ENCODE measurements at regions of chr7 and their contacts with region 1.

Region 1: GRCh38 chr7:32891800-32892520 is 400 bp upstream of the KBTBD2 start:
- DNase-seq: peak; percentile 91
- ATAC-seq: peak; percentile 57
- H3K4me3 ChIP-seq: peak overlapping the region; percentile 98
- H3K27ac ChIP-seq: peak overlapping the region; percentile 71
- H3K4me1 ChIP-seq: peaks cover 13% of the 10 kb centered on the region
- H3K27me3 ChIP-seq: no peaks in the 10 kb centered on the region
- CTCF ChIP-seq: no peak

Region 2: GRCh38 chr7:32490127-32490822 is 401.7 kb before region 1 on chr7 and contains the start of gene LSM5:
- CTCF ChIA-PET with region 1: no interaction called
- POLR2A ChIA-PET with region 1: no interaction called
- intact Hi-C with region 1: loop called (anchors 5 kb)
- DNase-seq: peak; percentile 93
- ATAC-seq: peak; percentile 67
- H3K4me3 ChIP-seq: peak within 1 kb of the TSS; percentile 91
- H3K27ac ChIP-seq: peak within 1 kb of the TSS; percentile 70
- H3K4me1 ChIP-seq: peaks cover 14% of the 10 kb centered on the region; the same call in 1 of the 2 replicates
- H3K27me3 ChIP-seq: no peaks in the 10 kb centered on the region
- CTCF ChIP-seq: no peak
- total RNA-seq, gene LSM5: 24.8 and 38.9 TPM in 2 replicates

Region 3: DNA sequence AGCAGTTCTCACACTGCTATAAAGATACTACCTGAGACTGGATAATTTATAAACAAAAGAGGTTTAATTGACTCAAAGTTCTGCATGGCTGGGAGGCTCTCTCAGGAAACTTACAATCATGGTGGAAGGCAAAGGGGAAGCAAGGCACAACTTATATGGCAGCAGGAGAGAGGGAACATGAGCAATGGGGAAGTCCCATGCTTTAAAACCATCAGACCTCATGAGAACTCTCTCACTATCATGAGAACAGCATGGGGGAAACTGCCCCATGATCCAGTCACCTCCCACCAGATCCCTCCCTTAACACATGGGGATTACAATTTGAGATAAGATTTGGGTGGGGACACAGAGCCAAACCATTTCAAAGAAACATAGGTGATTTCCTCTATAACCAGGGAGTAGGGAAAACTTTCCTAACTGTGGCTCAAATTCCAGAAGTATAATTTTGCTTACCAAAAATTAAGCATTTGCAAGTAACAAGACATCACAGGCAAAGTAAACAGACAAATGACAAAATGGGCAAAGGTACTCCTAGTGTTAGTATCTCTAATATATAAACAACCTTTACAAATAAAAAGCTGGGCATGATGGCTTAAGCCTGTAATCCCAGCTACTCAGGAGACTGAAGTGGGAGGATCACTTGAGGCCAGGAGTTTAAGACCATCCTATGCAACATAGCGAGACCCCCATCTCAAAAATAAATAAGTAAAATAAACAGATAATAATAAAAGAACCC is 88.4 kb before region 1 on chr7:
- CTCF ChIA-PET with region 1: no interaction called
- POLR2A ChIA-PET with region 1: no interaction called
- intact Hi-C with region 1: loop called (anchors 5 kb)
- DNase-seq: no peak
- ATAC-seq: no peak
- H3K4me3 ChIP-seq: no peak overlapping the region
- H3K27ac ChIP-seq: no peak overlapping the region
- H3K4me1 ChIP-seq: no peaks in the 10 kb centered on the region
- H3K27me3 ChIP-seq: no peaks in the 10 kb centered on the region
- CTCF ChIP-seq: no peak

Region 4: DNA sequence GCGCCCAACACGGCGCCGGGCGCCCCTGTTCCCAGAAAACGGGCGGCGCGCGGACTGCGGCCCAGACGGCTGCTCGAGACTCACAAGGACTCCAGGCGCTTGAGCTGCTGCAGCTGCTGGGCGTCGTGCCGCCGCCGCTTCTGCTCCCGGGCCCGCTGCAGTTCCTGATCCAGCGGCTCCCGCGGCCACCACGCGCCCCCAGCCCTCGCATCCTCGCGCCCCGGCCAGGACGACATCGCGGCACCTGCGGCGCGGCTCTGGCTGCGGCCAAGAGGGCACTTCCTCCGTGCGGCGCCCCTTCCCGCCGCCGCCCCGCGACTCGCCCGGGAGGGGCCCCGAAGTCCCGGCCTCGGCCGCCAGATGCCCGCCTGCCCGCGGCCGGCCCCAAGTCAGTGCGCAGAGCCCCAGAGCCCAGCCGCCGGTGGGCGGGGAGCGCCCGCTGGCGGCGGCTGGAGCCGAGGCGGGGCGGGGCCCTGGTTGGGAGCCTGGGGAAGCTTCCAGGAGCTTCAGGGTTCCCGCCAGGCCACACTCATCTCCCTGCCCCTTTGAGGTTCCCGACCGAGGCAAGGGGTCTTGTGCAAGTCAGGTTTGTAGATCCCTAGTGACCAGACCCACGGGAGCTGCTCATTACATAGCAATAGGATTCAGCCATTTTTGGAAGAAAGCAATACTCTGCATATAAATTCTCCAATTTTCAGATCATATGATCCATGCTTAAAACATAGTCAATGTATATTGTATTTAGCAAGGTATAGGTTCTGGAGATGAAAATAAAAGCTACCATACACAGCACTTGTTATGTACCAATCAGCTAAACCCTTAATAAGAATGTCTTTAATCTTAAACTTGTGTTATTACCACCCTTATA is 51.1 kb after region 1 on chr7:
- CTCF ChIA-PET with region 1: no interaction called
- POLR2A ChIA-PET with region 1: no interaction called
- intact Hi-C with region 1: loop called (anchors 2 kb)
- DNase-seq: peak; percentile 66
- ATAC-seq: peak; percentile 98
- H3K4me3 ChIP-seq: peak overlapping the region; percentile 65
- H3K27ac ChIP-seq: no peak overlapping the region
- H3K4me1 ChIP-seq: peaks cover 3% of the 10 kb centered on the region; the same call in 1 of the 2 replicates
- H3K27me3 ChIP-seq: no peaks in the 10 kb centered on the region
- CTCF ChIP-seq: peak; percentile 45; the same call in 1 of the 2 replicates

Region 5: GRCh38 chr7:32957326-32958045 is 65.5 kb after region 1 on chr7 and contains the start of gene FKBP9:
- CTCF ChIA-PET with region 1: no interaction called
- POLR2A ChIA-PET with region 1: interaction called, 7 read pairs
- intact Hi-C with region 1: loop called (anchors 1 kb)
- DNase-seq: peak; percentile 90
- ATAC-seq: peak; percentile 91
- H3K4me3 ChIP-seq: peak within 1 kb of the TSS; percentile 96
- H3K27ac ChIP-seq: peak within 1 kb of the TSS; percentile 41
- H3K4me1 ChIP-seq: peaks cover 14% of the 10 kb centered on the region
- H3K27me3 ChIP-seq: no peaks in the 10 kb centered on the region
- CTCF ChIP-seq: no peak
- total RNA-seq, gene FKBP9: 62.3 and 63.4 TPM in 2 replicates

Region 6: DNA sequence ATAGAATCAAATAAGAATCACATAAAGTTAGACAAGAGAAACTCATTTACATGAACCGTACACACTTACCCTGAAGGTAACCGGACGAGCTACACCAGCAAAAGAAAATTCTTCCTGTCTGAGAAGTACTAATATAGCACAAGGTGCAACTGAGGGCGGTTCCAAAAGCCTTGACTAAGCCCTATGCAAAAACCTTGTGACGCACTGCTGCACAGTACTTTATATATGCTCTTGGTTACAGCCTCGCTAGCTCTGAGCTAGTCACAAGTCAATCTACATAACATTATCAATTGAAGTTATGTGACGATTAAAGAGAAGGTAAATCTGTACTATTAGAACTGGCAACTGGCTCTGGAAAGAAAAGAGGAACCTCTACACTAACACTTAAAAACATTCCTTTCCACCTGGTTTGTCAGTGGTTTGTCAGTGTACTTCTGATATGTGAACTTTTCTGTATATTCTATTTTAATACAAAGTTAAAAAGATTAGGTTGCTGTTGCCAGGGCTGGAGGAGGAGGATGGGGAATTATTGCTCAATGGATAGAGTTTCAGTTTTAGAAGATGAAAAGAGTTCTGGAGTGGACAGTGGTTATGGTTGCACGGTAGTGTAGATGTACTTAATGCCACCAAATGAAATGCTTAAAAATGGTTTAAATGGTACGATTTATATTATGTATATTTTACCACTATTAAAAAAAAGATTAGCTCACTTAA is 149.0 kb after region 1 on chr7:
- CTCF ChIA-PET with region 1: no interaction called
- POLR2A ChIA-PET with region 1: interaction called, 3 read pairs
- intact Hi-C with region 1: loop called (anchors 5 kb)
- DNase-seq: peak; percentile 86
- ATAC-seq: peak; percentile 96
- H3K4me3 ChIP-seq: peak overlapping the region; percentile 53
- H3K27ac ChIP-seq: peak overlapping the region; percentile 40
- H3K4me1 ChIP-seq: peaks cover 67% of the 10 kb centered on the region
- H3K27me3 ChIP-seq: no peaks in the 10 kb centered on the region
- CTCF ChIP-seq: no peak

Region 7: GRCh38 chr7:33062782-33063443 is 171.0 kb after region 1 on chr7:
- CTCF ChIA-PET with region 1: interaction called, 3 read pairs
- POLR2A ChIA-PET with region 1: no interaction called
- intact Hi-C with region 1: loop called (anchors 2 kb)
- DNase-seq: peak; percentile 89
- ATAC-seq: peak; percentile 93
- H3K4me3 ChIP-seq: peak overlapping the region; percentile 85
- H3K27ac ChIP-seq: peak overlapping the region; percentile 31
- H3K4me1 ChIP-seq: peaks cover 26% of the 10 kb centered on the region; the same call in 1 of the 2 replicates
- H3K27me3 ChIP-seq: no peaks in the 10 kb centered on the region
- CTCF ChIP-seq: no peak